ENCODE measurements at regions of chr9 and their contacts with region 1.

Region 1: DNA sequence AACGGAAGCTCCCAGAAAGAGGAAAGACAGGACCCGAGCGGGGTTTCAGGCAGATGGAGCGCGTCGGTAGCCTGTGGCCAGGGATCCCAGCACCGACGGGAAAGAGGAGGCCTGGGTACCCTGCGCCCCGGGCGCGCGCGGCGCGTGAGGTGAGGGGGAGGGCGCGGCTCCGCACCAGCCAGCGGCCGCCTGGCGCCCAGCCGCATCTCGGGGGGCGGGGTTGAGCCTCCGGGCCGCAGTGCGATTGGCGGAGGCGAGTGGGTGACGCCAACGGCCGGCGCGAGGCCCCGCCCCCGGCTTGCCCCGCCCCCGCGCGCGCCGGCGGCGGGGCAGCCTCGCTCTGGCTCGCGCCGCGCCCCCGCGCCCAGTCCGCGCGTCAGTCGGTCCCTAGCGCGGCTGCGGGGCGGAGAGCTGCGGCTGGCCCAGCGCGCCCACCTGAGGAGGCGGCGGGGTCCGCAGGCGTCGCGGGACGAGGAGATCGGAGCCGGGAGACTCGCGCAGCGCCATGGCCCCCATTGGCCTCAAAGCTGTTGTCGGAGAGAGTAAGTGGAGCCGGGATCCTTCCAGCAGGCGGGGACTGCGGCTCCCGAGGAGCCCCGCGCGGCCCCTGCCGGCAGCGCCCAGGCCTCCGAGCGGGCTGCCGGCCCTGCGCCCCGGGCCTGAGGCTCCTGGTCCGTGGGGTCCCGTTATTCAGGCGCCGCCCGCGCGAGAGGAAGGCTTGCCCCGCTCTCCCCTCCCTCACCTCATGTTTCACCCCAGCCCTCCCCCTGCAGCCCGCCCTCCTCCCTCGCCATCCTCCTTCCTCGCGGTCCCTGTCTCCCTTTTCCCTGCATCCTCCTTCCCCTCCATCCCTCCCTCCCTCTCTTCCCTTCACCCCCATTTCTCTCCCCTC is at the start of gene STXBP1:
- DNase-seq: peak; percentile 68 to 96 (median 79)
- ATAC-seq: peak; percentile 93
- H3K4me3 ChIP-seq: peak within 1 kb of the TSS; percentile 89
- H3K4me3 Mint-ChIP-seq: peak within 1 kb of the TSS; percentile 90 to 99 (median 96)
- H3K27ac ChIP-seq: peak within 1 kb of the TSS; percentile 51
- H3K27ac Mint-ChIP-seq: peak within 1 kb of the TSS; percentile 66 to 93 (median 86)
- H3K4me1 ChIP-seq: peaks cover 11 to 16% of the 10 kb centered on the region in 2 donors
- H3K4me1 Mint-ChIP-seq: peaks cover 32 to 42% (median 37%) of the 10 kb centered on the region in 7 donors
- H3K27me3 ChIP-seq: no peaks in the 10 kb centered on the region
- H3K27me3 Mint-ChIP-seq: peaks cover 0 to 40% (median 17%) of the 10 kb centered on the region in 5 donors
- total RNA-seq, gene STXBP1: 6.7 to 17.8 (median 14.1) TPM

Region 2: GRCh38 chr9:127244609-127245601 is 367.2 kb before region 1 on chr9:
- CTCF ChIA-PET with region 1: no interaction called
- POLR2A ChIA-PET with region 1: no interaction called
- intact Hi-C with region 1: loop called in 1 of 2 experiments (anchors 2 kb)
- DNase-seq: peak; percentile 84 to 94 (median 91)
- ATAC-seq: peak; percentile 100
- H3K4me3 ChIP-seq: peak overlapping the region; percentile 85
- H3K4me3 Mint-ChIP-seq: peak overlapping the region; percentile 80 to 92 (median 88)
- H3K27ac ChIP-seq: no peak overlapping the region
- H3K27ac Mint-ChIP-seq: peak overlapping the region in 7 of 9 donors; percentile 28 to 80 (median 59)
- H3K4me1 ChIP-seq: peaks cover 0 to 5% of the 10 kb centered on the region in 2 donors
- H3K4me1 Mint-ChIP-seq: peaks cover 4 to 16% (median 8%) of the 10 kb centered on the region in 7 donors
- H3K27me3 ChIP-seq: no peaks in the 10 kb centered on the region
- H3K27me3 Mint-ChIP-seq: peaks cover 0 to 24% (median 4%) of the 10 kb centered on the region in 5 donors

Region 3: DNA sequence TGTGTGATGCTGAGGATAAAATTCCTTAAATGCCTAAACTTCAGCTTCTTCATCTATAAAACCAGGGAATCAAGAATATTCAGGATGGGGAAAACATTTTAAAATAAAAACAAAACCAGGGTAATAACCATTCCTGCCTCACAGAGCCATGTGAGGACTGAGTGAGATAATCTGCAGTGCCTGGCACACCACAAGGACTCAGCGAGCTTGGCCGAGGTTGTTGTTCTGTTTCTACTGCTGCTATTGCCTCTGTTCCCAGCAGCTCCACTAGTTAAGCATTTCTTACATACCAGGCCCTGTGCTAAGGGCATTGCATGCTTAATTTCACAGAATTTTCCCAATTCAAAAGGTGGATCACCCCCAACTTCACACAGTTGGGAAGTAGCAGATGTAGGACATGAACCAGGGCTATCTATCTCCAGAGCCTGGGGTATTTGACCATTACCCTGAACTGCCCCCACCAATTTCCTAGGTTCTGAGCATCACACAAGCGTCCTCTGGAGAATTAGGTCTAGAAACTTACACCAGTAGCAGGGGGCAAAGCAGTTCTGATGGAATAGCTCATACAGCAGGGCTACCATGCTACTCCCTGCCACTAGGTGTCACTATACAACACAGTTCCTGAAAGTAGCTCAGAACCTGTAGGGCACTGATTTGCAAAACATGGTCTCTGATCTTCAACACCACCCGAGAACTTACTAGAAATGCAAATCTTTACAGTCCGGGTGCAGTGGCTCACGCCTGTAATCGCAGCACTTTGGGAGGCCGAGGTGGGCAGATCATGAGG is 86.6 kb before region 1 on chr9:
- CTCF ChIA-PET with region 1: no interaction called
- POLR2A ChIA-PET with region 1: no interaction called
- intact Hi-C with region 1: no loop called
- DNase-seq: peak in 4 of 9 donors; percentile 20 to 31 (median 26)
- ATAC-seq: peak; percentile 66
- H3K4me3 ChIP-seq: no peak overlapping the region
- H3K4me3 Mint-ChIP-seq: peak overlapping the region in 1 of 10 donors; percentile 32
- H3K27ac ChIP-seq: no peak overlapping the region
- H3K27ac Mint-ChIP-seq: no peak overlapping the region
- H3K4me1 ChIP-seq: no peaks in the 10 kb centered on the region
- H3K4me1 Mint-ChIP-seq: peaks cover 0 to 3% (median 0%) of the 10 kb centered on the region in 7 donors
- H3K27me3 ChIP-seq: no peaks in the 10 kb centered on the region
- H3K27me3 Mint-ChIP-seq: no peaks in the 10 kb centered on the region

Region 4: GRCh38 chr9:127568971-127569885 is 42.9 kb before region 1 on chr9:
- CTCF ChIA-PET with region 1: no interaction called
- POLR2A ChIA-PET with region 1: no interaction called
- intact Hi-C with region 1: loop called (anchors 1 to 5 kb)
- DNase-seq: peak; percentile 20 to 82 (median 60)
- ATAC-seq: peak; percentile 91
- H3K4me3 ChIP-seq: peak overlapping the region; percentile 52
- H3K4me3 Mint-ChIP-seq: peak overlapping the region; percentile 81 to 90 (median 86)
- H3K27ac ChIP-seq: peak overlapping the region; percentile 62
- H3K27ac Mint-ChIP-seq: peak overlapping the region in 8 of 9 donors; percentile 65 to 96 (median 84)
- H3K4me1 ChIP-seq: peaks cover 12 to 18% of the 10 kb centered on the region in 2 donors
- H3K4me1 Mint-ChIP-seq: peaks cover 19 to 56% (median 21%) of the 10 kb centered on the region in 7 donors
- H3K27me3 ChIP-seq: no peaks in the 10 kb centered on the region
- H3K27me3 Mint-ChIP-seq: no peaks in the 10 kb centered on the region

Region 5: DNA sequence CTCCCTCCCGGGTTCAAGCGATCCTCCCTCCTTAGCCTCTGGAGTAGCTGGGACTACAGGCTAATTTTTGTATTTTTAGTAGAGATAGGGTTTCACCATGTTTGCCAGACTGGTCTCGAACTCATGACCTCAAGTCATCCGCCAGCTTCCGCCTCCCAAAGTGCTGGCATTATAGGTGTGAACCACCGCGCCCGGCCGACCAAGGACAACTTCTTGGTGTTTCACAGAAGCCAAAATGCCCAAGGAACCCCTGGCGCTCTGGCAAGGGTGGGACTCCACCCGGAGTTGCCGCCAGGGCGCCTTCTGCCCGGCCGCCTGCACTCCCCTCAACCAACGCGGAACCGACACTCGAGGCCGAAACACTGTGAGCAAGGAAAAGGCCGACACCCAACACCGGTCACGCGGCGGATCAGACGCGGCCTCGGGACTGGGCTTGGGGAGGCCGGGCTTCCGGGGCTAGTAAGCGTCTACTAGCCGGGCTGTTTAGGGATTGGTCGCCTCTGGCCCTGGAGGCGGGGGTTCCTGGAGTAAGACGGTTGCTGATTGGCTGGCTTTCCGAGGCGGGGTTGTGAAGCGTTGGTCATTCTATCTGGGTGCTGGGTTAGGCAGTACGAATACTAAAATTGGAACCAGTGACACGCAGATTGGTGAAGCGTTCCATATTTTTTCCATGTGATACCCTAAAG is 87.0 kb after region 1 on chr9:
- CTCF ChIA-PET with region 1: interaction called, 5 read pairs
- POLR2A ChIA-PET with region 1: no interaction called
- intact Hi-C with region 1: loop called in 1 of 2 experiments (anchors 2 kb)
- DNase-seq: peak; percentile 63 to 81 (median 78)
- ATAC-seq: peak; percentile 99
- H3K4me3 ChIP-seq: peak overlapping the region; percentile 62
- H3K4me3 Mint-ChIP-seq: peak overlapping the region; percentile 73 to 87 (median 84)
- H3K27ac ChIP-seq: peak overlapping the region; percentile 26
- H3K27ac Mint-ChIP-seq: peak overlapping the region; percentile 10 to 91 (median 77)
- H3K4me1 ChIP-seq: peaks cover 6 to 7% of the 10 kb centered on the region in 2 donors
- H3K4me1 Mint-ChIP-seq: peaks cover 5 to 13% (median 12%) of the 10 kb centered on the region in 7 donors
- H3K27me3 ChIP-seq: no peaks in the 10 kb centered on the region
- H3K27me3 Mint-ChIP-seq: peaks cover 0 to 2% (median 0%) of the 10 kb centered on the region in 5 donors

Region 6: GRCh38 chr9:127715394-127716337 is 103.5 kb after region 1 on chr9 and contains the starts of genes PTRH1 and TTC16:
- CTCF ChIA-PET with region 1: no interaction called
- POLR2A ChIA-PET with region 1: interaction called, 4 read pairs
- intact Hi-C with region 1: loop called (anchors 5 kb)
- DNase-seq: peak; percentile 91 to 98 (median 96)
- ATAC-seq: peak; percentile 96
- H3K4me3 ChIP-seq: peak within 1 kb of the TSS; percentile 85
- H3K4me3 Mint-ChIP-seq: peak within 1 kb of the TSS; percentile 93 to 100 (median 98)
- H3K27ac ChIP-seq: peak within 1 kb of the TSS; percentile 89
- H3K27ac Mint-ChIP-seq: peak within 1 kb of the TSS; percentile 86 to 99 (median 97)
- H3K4me1 ChIP-seq: peaks cover 31 to 32% of the 10 kb centered on the region in 2 donors
- H3K4me1 Mint-ChIP-seq: peaks cover 28 to 47% (median 30%) of the 10 kb centered on the region in 7 donors
- H3K27me3 ChIP-seq: no peaks in the 10 kb centered on the region
- H3K27me3 Mint-ChIP-seq: no peaks in the 10 kb centered on the region
- total RNA-seq, gene PTRH1: 7.8 to 9.5 (median 8.6) TPM
- total RNA-seq, gene TTC16: 0.29 to 9.9 (median 4.6) TPM

Region 7: GRCh38 chr9:127779136-127779981 is 167.2 kb after region 1 on chr9:
- CTCF ChIA-PET with region 1: no interaction called
- POLR2A ChIA-PET with region 1: no interaction called
- intact Hi-C with region 1: loop called in 1 of 2 experiments (anchors 5 kb)
- DNase-seq: peak in 1 of 9 donors; percentile 64
- ATAC-seq: peak; percentile 39
- H3K4me3 ChIP-seq: peak overlapping the region; percentile 97
- H3K4me3 Mint-ChIP-seq: peak overlapping the region; percentile 94 to 100 (median 98)
- H3K27ac ChIP-seq: peak overlapping the region; percentile 88
- H3K27ac Mint-ChIP-seq: peak overlapping the region; percentile 88 to 98 (median 94)
- H3K4me1 ChIP-seq: peaks cover 51 to 59% of the 10 kb centered on the region in 2 donors
- H3K4me1 Mint-ChIP-seq: peaks cover 32 to 76% (median 60%) of the 10 kb centered on the region in 7 donors
- H3K27me3 ChIP-seq: no peaks in the 10 kb centered on the region
- H3K27me3 Mint-ChIP-seq: no peaks in the 10 kb centered on the region